ENCODE measurements at regions of chr6 and their contacts with region 1.

Region 1: GRCh38 chr6:105601541-105602236 is 198.8 kb upstream of the PREP start:
- DNase-seq: peak; percentile 99
- H3K4me3 Mint-ChIP-seq: peak overlapping the region; percentile 56
- H3K27ac Mint-ChIP-seq: peak overlapping the region; percentile 98
- H3K4me1 Mint-ChIP-seq: peaks cover 38% of the 10 kb centered on the region
- H3K27me3 Mint-ChIP-seq: no peaks in the 10 kb centered on the region
- CTCF ChIP-seq: no peak

Region 2: GRCh38 chr6:105484238-105485161 is 117.2 kb before region 1 on chr6:
- CTCF ChIA-PET with region 1: interaction called, 4 read pairs
- POLR2A ChIA-PET with region 1: interaction called, 4 read pairs
- intact Hi-C with region 1: loop called (anchors 2 kb)
- DNase-seq: peak; percentile 71
- H3K4me3 Mint-ChIP-seq: peak overlapping the region; percentile 3
- H3K27ac Mint-ChIP-seq: peak overlapping the region; percentile 83
- H3K4me1 Mint-ChIP-seq: peaks cover 36% of the 10 kb centered on the region
- H3K27me3 Mint-ChIP-seq: no peaks in the 10 kb centered on the region
- CTCF ChIP-seq: peak; percentile 80

Region 3: DNA sequence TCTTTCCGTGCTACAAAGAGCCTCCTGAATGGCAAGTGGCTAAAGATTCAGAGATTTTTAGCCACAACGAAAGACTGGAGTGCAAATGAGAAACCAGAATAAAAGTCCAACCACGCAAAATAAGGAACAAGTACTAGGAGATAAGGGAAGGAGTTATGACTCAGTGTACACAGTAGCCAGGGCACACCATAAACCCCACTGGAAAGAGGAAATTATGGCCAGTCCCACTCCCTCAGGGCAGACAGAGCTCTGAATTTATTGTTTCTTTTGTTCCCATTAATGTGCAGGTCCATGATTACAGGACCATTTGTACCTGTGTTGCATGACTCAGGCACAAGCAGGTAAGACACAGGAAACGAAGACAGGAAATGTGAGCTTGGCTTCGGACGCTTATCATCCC is 48.5 kb before region 1 on chr6:
- CTCF ChIA-PET with region 1: no interaction called
- POLR2A ChIA-PET with region 1: interaction called, 10 read pairs
- intact Hi-C with region 1: no loop called
- DNase-seq: peak; percentile 87
- H3K4me3 Mint-ChIP-seq: no peak overlapping the region
- H3K27ac Mint-ChIP-seq: peak overlapping the region; percentile 71
- H3K4me1 Mint-ChIP-seq: peaks cover 15% of the 10 kb centered on the region
- H3K27me3 Mint-ChIP-seq: no peaks in the 10 kb centered on the region
- CTCF ChIP-seq: no peak

Region 4: GRCh38 chr6:105644073-105644489 is 42.4 kb after region 1 on chr6:
- CTCF ChIA-PET with region 1: no interaction called
- POLR2A ChIA-PET with region 1: interaction called, 40 read pairs
- intact Hi-C with region 1: no loop called
- DNase-seq: no peak
- H3K4me3 Mint-ChIP-seq: no peak overlapping the region
- H3K27ac Mint-ChIP-seq: no peak overlapping the region
- H3K4me1 Mint-ChIP-seq: peaks cover 13% of the 10 kb centered on the region
- H3K27me3 Mint-ChIP-seq: no peaks in the 10 kb centered on the region
- CTCF ChIP-seq: no peak

Region 5: DNA sequence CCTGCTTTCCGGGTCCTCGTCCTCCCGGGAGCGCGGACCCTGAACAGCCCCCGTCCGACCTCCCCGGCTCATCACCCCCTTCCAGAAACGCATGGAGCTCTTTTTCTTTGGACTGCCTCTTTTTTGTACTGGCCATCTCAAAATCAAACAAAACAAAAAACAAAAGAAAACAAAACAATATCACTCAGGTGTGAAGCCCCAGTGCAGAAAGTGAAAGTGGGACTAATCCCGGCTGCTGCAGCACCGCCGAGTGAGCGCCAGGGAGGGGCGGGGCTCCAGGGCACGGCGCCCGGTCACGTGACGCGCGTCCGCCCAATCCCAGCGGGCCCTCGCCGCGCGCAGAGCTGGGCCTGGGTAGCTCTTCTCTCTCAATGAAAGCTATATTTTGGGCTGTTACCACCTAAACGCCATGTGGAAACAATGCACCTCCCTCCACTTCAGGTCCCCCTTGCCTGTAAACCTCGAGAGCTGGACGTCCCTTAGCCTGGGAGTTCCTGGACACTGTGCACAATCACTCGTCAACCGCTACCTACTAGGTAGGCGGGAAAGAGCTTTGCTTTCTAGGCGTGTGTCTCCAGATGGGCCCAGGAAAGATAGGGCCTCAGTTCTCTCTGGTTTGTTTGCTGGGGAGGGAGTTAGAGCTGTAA is 390.7 kb after region 1 on chr6:
- CTCF ChIA-PET with region 1: no interaction called
- POLR2A ChIA-PET with region 1: interaction called, 10 read pairs
- intact Hi-C with region 1: loop called (anchors 5 kb)
- DNase-seq: peak; percentile 79
- H3K4me3 Mint-ChIP-seq: peak overlapping the region; percentile 85
- H3K27ac Mint-ChIP-seq: no peak overlapping the region
- H3K4me1 Mint-ChIP-seq: peaks cover 34% of the 10 kb centered on the region
- H3K27me3 Mint-ChIP-seq: no peaks in the 10 kb centered on the region
- CTCF ChIP-seq: no peak

Region 6: DNA sequence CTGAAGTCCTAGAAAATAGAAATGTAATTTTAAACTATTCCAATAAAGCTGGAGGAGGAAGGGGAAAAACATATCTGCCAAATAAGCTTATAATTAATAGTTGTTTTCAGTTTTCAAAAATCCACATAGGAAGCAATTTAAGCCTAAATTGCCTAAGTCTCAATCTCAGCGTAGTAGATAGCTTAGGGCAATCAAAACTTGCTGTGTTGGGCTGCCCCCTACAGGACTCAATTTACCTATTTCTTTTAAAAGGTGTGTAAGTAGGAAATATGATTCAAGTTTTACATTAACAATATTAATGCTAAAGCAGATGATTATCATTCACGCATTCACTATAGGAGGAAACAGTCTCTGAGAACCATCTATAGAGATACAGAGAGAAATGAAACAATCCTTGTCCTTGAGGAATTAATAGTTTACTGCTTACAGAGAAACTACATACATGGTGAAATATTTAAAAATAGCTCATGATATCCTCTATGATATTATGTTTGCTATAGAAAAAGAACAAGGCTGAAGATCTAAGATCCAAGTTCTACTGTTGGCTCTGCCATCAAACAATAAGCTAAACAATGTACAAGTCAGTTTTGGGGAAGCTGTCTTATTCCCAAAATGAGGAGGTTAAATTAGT is 621.7 kb after region 1 on chr6:
- CTCF ChIA-PET with region 1: interaction called, 3 read pairs
- POLR2A ChIA-PET with region 1: interaction called, 5 read pairs
- intact Hi-C with region 1: loop called (anchors 5 kb)
- DNase-seq: peak; percentile 78
- H3K4me3 Mint-ChIP-seq: no peak overlapping the region
- H3K27ac Mint-ChIP-seq: no peak overlapping the region
- H3K4me1 Mint-ChIP-seq: peaks cover 4% of the 10 kb centered on the region
- H3K27me3 Mint-ChIP-seq: no peaks in the 10 kb centered on the region
- CTCF ChIP-seq: peak; percentile 62

Region 7: GRCh38 chr6:106461084-106461483 is 859.4 kb after region 1 on chr6:
- CTCF ChIA-PET with region 1: no interaction called
- POLR2A ChIA-PET with region 1: no interaction called
- intact Hi-C with region 1: no loop called
- DNase-seq: no peak
- H3K4me3 Mint-ChIP-seq: no peak overlapping the region
- H3K27ac Mint-ChIP-seq: no peak overlapping the region
- H3K4me1 Mint-ChIP-seq: no peaks in the 10 kb centered on the region
- H3K27me3 Mint-ChIP-seq: no peaks in the 10 kb centered on the region
- CTCF ChIP-seq: no peak